Gastrocnemius medialis (tissue), 4 donors: ENCODE measurements at regions of chr3 and their contacts with region 1.

Region 1: DNA sequence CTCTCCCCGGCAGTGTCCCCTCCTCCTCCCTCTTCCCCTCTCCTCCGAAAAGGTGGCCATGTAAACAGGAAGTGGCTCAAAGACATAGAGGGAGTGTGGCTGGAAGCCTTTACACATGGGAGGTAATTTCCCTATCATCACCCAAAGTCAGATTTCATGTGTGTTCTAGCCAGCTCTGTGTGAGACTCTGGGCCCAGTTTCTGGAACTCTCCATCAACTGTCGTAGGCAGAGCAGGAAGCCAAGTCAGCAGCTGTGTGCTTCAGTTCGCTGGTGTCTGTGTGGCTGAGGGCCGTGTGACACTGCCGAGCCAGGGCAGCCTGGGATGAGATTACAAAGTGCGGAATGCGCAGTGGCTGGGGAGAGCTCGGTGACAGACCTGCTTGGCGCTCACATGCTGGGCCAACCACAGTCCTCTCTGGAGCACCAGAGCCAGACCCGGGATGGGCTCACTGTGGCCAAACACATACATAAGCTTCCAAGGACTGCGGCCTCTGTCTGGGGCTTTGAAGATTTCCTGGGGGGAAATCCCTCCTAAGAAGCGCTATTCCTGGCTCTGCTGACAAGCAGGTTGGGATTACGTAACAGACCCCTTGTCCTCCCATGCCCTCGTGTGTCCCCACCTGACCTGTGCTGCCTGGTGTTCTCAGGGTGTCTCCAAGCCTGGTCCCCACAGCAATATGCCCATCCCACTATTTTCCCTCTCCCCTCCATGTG is 50.7 kb downstream of the UMPS start:
- DNase-seq: peak; percentile 92 to 96
- ATAC-seq: peak; percentile 90
- H3K4me3 ChIP-seq: peak overlapping the region; percentile 1 to 34 (median 14)
- H3K27ac ChIP-seq: peak overlapping the region; percentile 81 to 93 (median 90)
- H3K4me1 ChIP-seq: peaks cover 35 to 42% of the 10 kb centered on the region in 2 donors
- H3K27me3 ChIP-seq: no peaks in the 10 kb centered on the region
- CTCF ChIP-seq: no peak
- POLR2A ChIP-seq: peak in 1 of 2 donors; percentile 60

Region 2: GRCh38 chr3:124315215-124316033 is 465.5 kb before region 1 on chr3:
- in situ Hi-C with region 1: no loop called
- intact Hi-C with region 1: no loop called
- DNase-seq: no peak
- ATAC-seq: no peak
- H3K4me3 ChIP-seq: no peak overlapping the region
- H3K27ac ChIP-seq: no peak overlapping the region
- H3K4me1 ChIP-seq: no peaks in the 10 kb centered on the region
- H3K27me3 ChIP-seq: no peaks in the 10 kb centered on the region
- CTCF ChIP-seq: no peak
- POLR2A ChIP-seq: no peak

Region 3: DNA sequence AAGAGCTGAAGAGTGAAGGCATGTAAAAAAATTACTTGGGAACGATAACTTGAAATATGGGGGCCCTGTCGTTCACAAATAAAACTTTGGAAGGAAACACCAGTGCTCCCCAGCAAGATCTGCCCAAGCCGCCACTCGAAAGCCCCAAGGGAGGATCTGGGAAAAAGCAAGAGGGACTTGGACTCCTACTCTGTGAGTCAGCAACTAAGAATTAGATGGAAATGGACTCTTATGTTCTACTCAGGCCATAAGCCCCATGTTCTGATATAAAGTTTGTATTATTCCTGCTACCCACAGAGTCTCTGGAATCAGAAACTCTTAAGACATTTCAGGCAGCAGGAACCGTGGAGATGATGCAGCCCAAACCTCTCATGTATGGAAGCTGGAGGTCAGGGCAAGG is 30.5 kb after region 1 on chr3:
- in situ Hi-C with region 1: no loop called
- intact Hi-C with region 1: loop called (anchors 2 kb)
- DNase-seq: no peak
- ATAC-seq: no peak
- H3K4me3 ChIP-seq: no peak overlapping the region
- H3K27ac ChIP-seq: peak overlapping the region; percentile 81 to 92 (median 83)
- H3K4me1 ChIP-seq: peaks cover 32 to 52% of the 10 kb centered on the region in 2 donors
- H3K27me3 ChIP-seq: no peaks in the 10 kb centered on the region
- CTCF ChIP-seq: no peak
- POLR2A ChIP-seq: no peak

Region 4: GRCh38 chr3:124887177-124887931 is 106.4 kb after region 1 on chr3 and contains the start of gene ITGB5:
- in situ Hi-C with region 1: no loop called
- intact Hi-C with region 1: loop called (anchors 2 kb)
- DNase-seq: peak; percentile 81 to 83
- ATAC-seq: peak; percentile 89
- H3K4me3 ChIP-seq: peak within 1 kb of the TSS; percentile 60 to 95 (median 64)
- H3K27ac ChIP-seq: peak within 1 kb of the TSS; percentile 80 to 92 (median 90)
- H3K4me1 ChIP-seq: peaks cover 5 to 6% of the 10 kb centered on the region in 2 donors
- H3K27me3 ChIP-seq: no peaks in the 10 kb centered on the region
- CTCF ChIP-seq: no peak
- POLR2A ChIP-seq: peak; percentile 71 to 82
- total RNA-seq, gene ITGB5: 35.2 to 101 (median 71.3) TPM